ENCODE measurements at regions of chr15 and their contacts with region 1.

Region 1: DNA sequence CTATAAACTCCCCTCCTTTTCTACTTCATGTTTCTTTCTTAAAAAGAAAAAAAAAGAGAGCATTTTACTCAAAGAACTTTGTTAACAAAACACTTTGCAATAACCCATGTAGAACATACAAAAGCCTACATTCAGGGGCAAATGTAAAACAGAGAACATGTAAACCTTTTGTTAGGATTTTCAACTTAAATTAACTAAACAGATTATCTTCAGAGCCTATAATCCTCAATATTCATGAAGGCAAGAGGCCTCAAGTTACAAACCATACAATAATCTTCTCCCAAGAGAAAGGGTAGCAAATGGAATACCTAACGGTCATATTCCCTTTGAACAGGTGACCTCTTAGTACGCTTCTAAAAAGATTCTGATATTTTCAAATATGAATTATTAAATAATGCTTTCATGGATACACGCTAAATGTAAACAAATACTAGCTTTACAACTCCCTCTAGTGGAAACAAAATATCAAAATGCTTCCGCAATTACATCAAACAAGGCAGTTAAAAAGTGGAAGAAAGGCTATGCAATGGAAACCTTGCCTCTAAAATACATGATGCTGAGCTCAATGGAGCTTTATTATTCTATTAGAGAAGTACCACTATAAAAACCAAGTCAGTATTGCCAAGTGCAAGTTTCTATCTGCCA is 9.9 kb downstream of the CEP152 start:
- DNase-seq: no peak
- H3K4me3 ChIP-seq: peak overlapping the region in 5 of 59 donors; percentile 5 to 38 (median 13)
- H3K27ac ChIP-seq: peak overlapping the region in 3 of 59 donors; percentile 3 to 8 (median 7)
- H3K27me3 ChIP-seq: no peaks in the 10 kb centered on the region
- CTCF ChIP-seq: peak; percentile 36 to 79 (median 65)

Region 2: GRCh38 chr15:48352474-48353072 is 448.4 kb before region 1 on chr15:
- intact Hi-C with region 1: loop called (anchors 5 to 10 kb)
- DNase-seq: peak in 7 of 10 donors; percentile 34 to 68 (median 46)
- H3K4me3 ChIP-seq: peak overlapping the region in 10 of 59 donors; percentile 4 to 34 (median 20)
- H3K27ac ChIP-seq: no peak overlapping the region
- H3K27me3 ChIP-seq: no peaks in the 10 kb centered on the region
- CTCF ChIP-seq: peak; percentile 56 to 90 (median 80)

Region 3: DNA sequence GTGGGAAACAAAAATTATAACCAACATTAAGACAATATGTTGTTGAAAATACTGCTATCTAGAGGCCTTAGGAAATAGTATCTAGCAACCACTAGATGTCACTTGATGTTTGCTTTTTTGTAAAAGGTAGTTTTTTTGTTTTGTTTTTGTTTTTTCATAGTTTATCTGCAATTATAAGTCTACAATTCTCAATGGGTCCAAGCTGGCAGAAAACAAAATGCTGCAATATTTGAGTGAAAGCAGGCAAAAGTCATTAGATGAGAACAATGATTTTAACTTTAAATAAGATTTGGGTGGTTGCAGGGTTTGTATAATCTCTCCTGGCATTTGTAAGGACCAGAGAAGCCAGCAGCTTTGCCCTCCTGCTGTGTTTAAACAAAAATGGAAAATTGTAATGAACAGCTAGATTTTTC is 442.7 kb before region 1 on chr15:
- intact Hi-C with region 1: loop called (anchors 5 to 10 kb)
- DNase-seq: no peak
- H3K4me3 ChIP-seq: peak overlapping the region in 10 of 59 donors; percentile 1 to 39 (median 7)
- H3K27ac ChIP-seq: no peak overlapping the region
- H3K27me3 ChIP-seq: no peaks in the 10 kb centered on the region
- CTCF ChIP-seq: peak; percentile 56 to 87 (median 73)

Region 4: DNA sequence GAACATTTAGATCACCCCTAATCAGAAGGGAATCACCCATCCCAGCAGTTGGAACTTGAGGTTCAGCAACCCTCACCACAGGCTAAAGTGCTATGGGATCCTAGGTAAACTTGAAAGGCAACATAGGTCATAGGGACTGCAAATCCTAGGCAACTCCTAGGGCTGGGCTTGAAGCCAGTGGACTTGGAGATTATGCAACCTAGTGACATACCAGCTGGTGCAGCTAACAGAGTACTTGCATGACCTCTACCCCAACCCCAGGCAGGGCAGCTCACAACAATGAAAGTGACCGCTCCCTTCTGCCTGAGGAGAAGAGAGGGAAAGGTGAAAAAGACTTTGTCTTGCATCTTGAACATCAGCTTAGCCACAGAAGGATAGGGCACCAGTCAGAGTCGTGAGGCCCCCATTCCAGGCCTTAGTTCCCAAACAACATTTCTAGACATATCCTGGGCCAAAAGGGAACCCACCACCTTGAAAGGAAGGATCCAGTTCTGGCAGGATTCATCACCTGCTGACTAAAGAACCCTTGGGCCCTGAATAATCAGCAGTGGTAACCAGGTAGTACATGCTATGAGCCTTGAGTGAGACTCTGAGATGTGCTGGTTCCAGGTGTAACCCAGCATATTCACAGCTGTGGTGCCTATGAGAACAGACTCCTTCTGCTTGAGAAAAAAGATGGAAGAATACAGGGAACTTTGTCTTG is 117.8 kb before region 1 on chr15:
- intact Hi-C with region 1: no loop called
- DNase-seq: no peak
- H3K4me3 ChIP-seq: no peak overlapping the region
- H3K27ac ChIP-seq: no peak overlapping the region
- H3K27me3 ChIP-seq: no peaks in the 10 kb centered on the region
- CTCF ChIP-seq: no peak

Measured in dorsolateral prefrontal cortex (tissue), 120 donors.